Heart right ventricle (tissue), 16 donors: ENCODE measurements at regions of chr3 and their contacts with region 1.

Region 1: GRCh38 chr3:167876620-167877281 is 141.2 kb downstream of the SERPINI1 start:
- DNase-seq: peak in 1 of 2 donors; percentile 26
- ATAC-seq: peak; percentile 70 to 91 (median 80)
- H3K4me3 ChIP-seq: no peak overlapping the region
- H3K27ac ChIP-seq: peak overlapping the region in 9 of 10 donors; percentile 51 to 94 (median 71)
- H3K4me1 ChIP-seq: peaks cover 0 to 70% (median 42%) of the 10 kb centered on the region in 9 donors
- H3K27me3 ChIP-seq: no peaks in the 10 kb centered on the region
- CTCF ChIP-seq: no peak

Region 2: DNA sequence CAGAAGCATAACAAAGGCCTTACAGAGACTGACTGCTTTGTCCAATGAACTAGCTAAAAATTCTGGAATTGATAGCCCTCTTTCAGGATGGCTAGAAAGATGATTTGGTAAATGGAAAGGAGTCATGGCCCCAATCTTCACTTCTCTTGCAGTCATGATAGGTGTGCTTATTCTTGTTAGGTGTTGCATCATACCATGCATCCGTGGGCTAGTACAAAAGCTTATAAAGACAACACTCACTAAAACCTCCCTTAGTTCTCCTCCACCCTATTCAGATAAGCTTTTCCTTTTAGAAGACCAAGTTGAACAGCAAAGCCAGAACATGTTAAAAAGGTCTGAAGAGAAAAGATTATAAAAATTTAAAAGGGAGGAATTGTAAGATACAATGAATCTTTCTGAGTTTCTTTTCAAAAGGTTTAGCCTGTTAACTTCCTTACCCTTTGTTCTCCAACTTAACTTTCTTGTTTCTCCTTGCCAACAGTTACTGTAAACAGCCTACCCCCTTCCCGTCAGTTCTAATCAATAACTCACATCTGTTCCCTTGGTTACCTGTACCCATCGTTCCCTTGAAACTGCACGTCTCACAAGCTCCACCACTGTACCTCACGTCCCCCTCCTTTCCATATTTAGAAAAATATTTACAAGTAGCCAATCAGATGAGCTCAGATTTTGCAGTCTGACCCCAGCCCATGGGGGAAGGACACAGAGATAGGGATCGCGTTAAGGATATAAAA is 602.4 kb before region 1 on chr3:
- intact Hi-C with region 1: no loop called
- DNase-seq: no peak
- ATAC-seq: no peak
- H3K4me3 ChIP-seq: no peak overlapping the region
- H3K27ac ChIP-seq: no peak overlapping the region
- H3K4me1 ChIP-seq: no peaks in the 10 kb centered on the region
- H3K27me3 ChIP-seq: no peaks in the 10 kb centered on the region
- CTCF ChIP-seq: no peak

Region 3: DNA sequence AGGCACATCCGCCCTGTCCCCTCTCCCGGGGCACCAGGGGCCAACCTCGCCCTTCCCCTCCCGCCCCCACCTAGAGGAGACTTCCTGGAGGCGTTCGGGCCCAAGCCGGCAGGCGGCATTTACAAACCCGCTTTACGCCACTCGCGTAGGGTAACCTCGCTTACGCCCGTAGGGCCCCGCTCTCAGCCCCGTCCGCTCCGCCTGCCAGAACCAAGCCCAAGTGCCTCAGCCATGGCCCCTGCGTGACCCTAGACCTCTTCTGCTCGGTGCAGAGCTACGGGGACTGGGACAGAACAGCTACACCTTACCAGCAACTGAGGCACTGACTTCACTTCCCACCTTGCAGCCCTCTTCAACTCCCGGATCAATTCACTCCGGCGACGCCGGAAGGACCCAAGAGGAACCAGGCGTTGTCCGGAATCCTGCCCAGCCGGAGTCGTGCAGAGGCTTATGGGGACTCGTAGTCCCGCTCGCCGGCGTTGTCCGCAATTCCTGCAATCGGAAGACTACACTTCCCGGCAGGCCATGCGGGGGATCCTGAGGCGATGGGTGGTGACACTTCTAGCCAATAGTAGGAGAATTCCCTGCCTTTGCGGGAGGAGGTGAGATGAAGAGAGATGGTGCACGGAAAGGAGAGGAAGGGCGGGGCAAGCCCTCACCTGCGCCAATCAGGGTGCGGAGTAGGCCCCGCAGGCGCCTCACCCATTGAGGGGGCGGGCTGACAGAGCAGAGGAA is 142.1 kb before region 1 on chr3 and contains the start of gene PDCD10:
- intact Hi-C with region 1: loop called in 6 of 10 experiments (anchors 5 to 10 kb)
- DNase-seq: peak; percentile 97 to 98
- ATAC-seq: peak; percentile 96 to 98 (median 97)
- H3K4me3 ChIP-seq: peak within 1 kb of the TSS; percentile 59 to 96 (median 84)
- H3K27ac ChIP-seq: peak within 1 kb of the TSS; percentile 71 to 96 (median 92)
- H3K4me1 ChIP-seq: peaks cover 0 to 56% (median 47%) of the 10 kb centered on the region in 9 donors
- H3K27me3 ChIP-seq: no peaks in the 10 kb centered on the region
- CTCF ChIP-seq: peak in 1 of 9 donors; percentile 3
- total RNA-seq, gene PDCD10: 28.3 to 44.3 (median 38.1) TPM

Region 4: DNA sequence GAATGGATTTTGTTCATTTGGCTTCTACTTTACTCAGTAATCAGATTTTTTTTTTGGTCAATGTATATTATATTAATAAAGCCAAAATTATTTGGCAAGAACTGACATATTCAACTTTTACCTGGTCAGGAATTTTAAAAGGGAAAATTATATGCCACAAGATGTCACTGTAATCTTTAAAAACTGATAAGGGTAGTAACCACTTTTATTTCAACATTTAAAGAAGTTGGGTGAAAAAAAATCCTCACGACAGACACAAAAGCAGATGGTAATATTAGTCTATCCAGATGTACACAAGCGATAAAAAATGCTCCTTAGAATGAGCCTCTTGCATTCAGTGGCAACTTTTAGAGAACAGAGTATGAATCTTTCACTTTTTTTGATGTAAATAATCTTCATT is 39.3 kb before region 1 on chr3:
- intact Hi-C with region 1: loop called in 5 of 10 experiments (anchors 1 to 5 kb)
- DNase-seq: no peak
- ATAC-seq: peak in 4 of 8 donors; percentile 17 to 62 (median 34)
- H3K4me3 ChIP-seq: peak overlapping the region in 2 of 10 donors; percentile 3 to 15
- H3K27ac ChIP-seq: peak overlapping the region in 2 of 10 donors; percentile 24 to 28
- H3K4me1 ChIP-seq: peaks cover 0 to 28% (median 0%) of the 10 kb centered on the region in 9 donors
- H3K27me3 ChIP-seq: no peaks in the 10 kb centered on the region
- CTCF ChIP-seq: peak in 8 of 9 donors; percentile 26 to 70 (median 50)